Activated naive CD4-positive, alpha-beta T cell treated with anti-CD3 and anti-CD28 coated beads for 36 hours (primary cell): ENCODE measurements at regions of chr11 and their contacts with region 1.

Region 1: DNA sequence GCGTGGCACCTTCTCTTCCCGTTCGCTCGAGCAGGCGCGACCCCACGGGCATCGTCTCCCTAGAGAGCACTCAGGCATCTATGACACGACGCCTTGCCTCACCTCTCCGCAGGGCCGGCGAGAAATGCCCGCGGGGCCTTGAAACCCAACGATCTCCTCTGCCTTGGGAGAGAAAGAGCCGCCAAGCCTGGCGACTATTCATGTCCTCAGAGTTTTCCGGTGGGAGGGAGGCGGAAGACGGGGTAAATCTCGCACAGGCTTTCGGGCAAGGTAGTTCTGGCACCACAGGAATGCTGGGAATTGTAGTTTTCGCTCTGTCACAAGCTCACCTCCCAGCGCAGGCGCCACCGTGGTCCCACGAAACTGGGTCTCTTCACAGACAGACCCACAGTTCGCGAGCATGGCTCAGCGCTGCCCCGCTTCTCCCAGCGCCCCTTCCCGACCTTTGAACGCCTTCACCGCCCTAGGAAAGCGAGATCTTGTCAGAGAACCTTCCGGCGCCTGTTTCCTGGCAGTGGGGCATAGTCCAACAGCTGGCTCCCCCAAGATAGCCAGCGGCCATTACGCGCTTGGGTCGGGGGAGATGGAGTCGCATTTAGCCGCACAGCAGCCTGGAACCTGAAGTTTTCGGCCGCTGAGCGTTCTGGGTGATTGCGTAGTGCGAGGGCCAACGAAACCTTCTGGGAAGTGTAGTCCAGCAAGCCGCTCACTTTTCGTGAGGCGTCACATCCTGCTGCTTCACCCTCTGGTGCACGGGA is at the start of gene CCDC90B:
- DNase-seq: peak; percentile 97
- H3K4me3 Mint-ChIP-seq: peak within 1 kb of the TSS; percentile 97
- H3K27ac Mint-ChIP-seq: peak within 1 kb of the TSS; percentile 98
- H3K4me1 Mint-ChIP-seq: peaks cover 28% of the 10 kb centered on the region
- H3K27me3 Mint-ChIP-seq: no peaks in the 10 kb centered on the region
- total RNA-seq, gene CCDC90B: 28.2 to 29.5 TPM

Region 2: GRCh38 chr11:82959987-82960778 is 325.8 kb before region 1 on chr11:
- CTCF ChIA-PET with region 1: no interaction called
- intact Hi-C with region 1: loop called (anchors 1 kb)
- DNase-seq: peak; percentile 55
- H3K4me3 Mint-ChIP-seq: peak overlapping the region; percentile 21
- H3K27ac Mint-ChIP-seq: peak overlapping the region; percentile 68
- H3K4me1 Mint-ChIP-seq: peaks cover 82% of the 10 kb centered on the region
- H3K27me3 Mint-ChIP-seq: no peaks in the 10 kb centered on the region

Region 3: GRCh38 chr11:83063073-83063754 is 222.7 kb before region 1 on chr11:
- CTCF ChIA-PET with region 1: no interaction called
- intact Hi-C with region 1: loop called (anchors 2 kb)
- DNase-seq: no peak
- H3K4me3 Mint-ChIP-seq: peak overlapping the region; percentile 78
- H3K27ac Mint-ChIP-seq: peak overlapping the region; percentile 93
- H3K4me1 Mint-ChIP-seq: peaks cover 64% of the 10 kb centered on the region
- H3K27me3 Mint-ChIP-seq: no peaks in the 10 kb centered on the region

Region 4: GRCh38 chr11:83097429-83098075 is 188.4 kb before region 1 on chr11:
- CTCF ChIA-PET with region 1: no interaction called
- intact Hi-C with region 1: no loop called
- DNase-seq: no peak
- H3K4me3 Mint-ChIP-seq: no peak overlapping the region
- H3K27ac Mint-ChIP-seq: no peak overlapping the region
- H3K4me1 Mint-ChIP-seq: no peaks in the 10 kb centered on the region
- H3K27me3 Mint-ChIP-seq: no peaks in the 10 kb centered on the region

Region 5: GRCh38 chr11:83115551-83115950 is 170.4 kb before region 1 on chr11:
- CTCF ChIA-PET with region 1: no interaction called
- intact Hi-C with region 1: loop called (anchors 1 kb)
- DNase-seq: no peak
- H3K4me3 Mint-ChIP-seq: no peak overlapping the region
- H3K27ac Mint-ChIP-seq: no peak overlapping the region
- H3K4me1 Mint-ChIP-seq: peaks cover 51% of the 10 kb centered on the region
- H3K27me3 Mint-ChIP-seq: no peaks in the 10 kb centered on the region

Region 6: DNA sequence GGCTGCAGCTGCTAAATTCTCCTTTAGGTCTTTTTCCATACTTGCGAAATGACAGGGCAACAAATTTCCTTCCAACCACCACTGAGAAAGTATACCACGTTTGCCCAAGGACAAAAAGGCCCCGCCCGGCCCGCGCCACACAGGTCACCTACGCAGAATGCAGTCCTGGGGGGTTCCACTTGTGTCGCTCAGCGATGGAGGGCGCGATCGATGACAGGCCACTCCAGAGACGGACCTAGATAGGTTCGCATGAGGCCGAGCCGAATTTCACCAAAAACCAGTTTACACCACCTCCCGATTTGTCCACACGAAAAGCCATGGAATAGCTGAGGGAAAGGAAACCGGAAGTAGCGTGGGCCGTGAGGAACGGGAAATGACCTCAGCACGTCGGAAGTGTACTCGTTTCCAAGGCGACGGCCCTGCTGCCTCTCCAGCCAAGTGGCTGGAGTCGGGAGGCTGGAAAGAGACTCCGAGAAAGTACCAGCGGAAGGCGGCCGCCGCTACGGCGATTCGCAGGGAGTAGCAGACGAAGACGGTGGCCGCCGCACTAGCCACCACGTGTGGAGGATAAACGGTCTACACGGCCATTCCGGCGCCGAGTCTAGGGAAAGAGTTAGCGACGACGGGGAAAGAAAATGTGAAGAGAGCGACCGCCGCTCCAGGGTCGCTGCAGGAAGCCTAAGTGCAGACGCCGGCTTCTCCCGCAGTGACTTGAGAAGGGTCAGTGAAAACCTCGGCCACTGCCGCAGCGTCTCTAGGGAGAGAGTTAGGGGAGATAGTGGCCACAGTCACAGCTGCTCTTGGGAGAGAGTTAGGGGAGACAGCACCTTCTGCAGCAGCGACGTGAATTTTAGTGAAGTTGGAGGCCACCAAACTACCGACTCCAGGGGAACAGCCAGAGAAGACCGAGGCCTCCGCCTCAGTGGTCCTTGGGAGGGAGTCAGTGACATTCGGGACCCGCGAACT is 92.4 kb before region 1 on chr11 and contains the start of gene ANKRD42:
- CTCF ChIA-PET with region 1: no interaction called
- intact Hi-C with region 1: loop called (anchors 1 kb)
- DNase-seq: peak; percentile 90
- H3K4me3 Mint-ChIP-seq: peak within 1 kb of the TSS; percentile 95
- H3K27ac Mint-ChIP-seq: peak within 1 kb of the TSS; percentile 95
- H3K4me1 Mint-ChIP-seq: peaks cover 44% of the 10 kb centered on the region
- H3K27me3 Mint-ChIP-seq: no peaks in the 10 kb centered on the region
- total RNA-seq, gene ANKRD42: 2.3 to 2.7 TPM

Region 7: GRCh38 chr11:83648610-83649527 is 362.9 kb after region 1 on chr11:
- CTCF ChIA-PET with region 1: no interaction called
- intact Hi-C with region 1: no loop called
- DNase-seq: no peak
- H3K4me3 Mint-ChIP-seq: no peak overlapping the region
- H3K27ac Mint-ChIP-seq: no peak overlapping the region
- H3K4me1 Mint-ChIP-seq: no peaks in the 10 kb centered on the region
- H3K27me3 Mint-ChIP-seq: peaks cover 2% of the 10 kb centered on the region

Region 8: GRCh38 chr11:83671289-83671688 is 385.3 kb after region 1 on chr11:
- CTCF ChIA-PET with region 1: no interaction called
- intact Hi-C with region 1: loop called (anchors 5 kb)
- DNase-seq: no peak
- H3K4me3 Mint-ChIP-seq: no peak overlapping the region
- H3K27ac Mint-ChIP-seq: no peak overlapping the region
- H3K4me1 Mint-ChIP-seq: no peaks in the 10 kb centered on the region
- H3K27me3 Mint-ChIP-seq: peaks cover 4% of the 10 kb centered on the region